AG04449 (cell line): ENCODE measurements at regions of chr9 and their contacts with region 1.

Region 1: DNA sequence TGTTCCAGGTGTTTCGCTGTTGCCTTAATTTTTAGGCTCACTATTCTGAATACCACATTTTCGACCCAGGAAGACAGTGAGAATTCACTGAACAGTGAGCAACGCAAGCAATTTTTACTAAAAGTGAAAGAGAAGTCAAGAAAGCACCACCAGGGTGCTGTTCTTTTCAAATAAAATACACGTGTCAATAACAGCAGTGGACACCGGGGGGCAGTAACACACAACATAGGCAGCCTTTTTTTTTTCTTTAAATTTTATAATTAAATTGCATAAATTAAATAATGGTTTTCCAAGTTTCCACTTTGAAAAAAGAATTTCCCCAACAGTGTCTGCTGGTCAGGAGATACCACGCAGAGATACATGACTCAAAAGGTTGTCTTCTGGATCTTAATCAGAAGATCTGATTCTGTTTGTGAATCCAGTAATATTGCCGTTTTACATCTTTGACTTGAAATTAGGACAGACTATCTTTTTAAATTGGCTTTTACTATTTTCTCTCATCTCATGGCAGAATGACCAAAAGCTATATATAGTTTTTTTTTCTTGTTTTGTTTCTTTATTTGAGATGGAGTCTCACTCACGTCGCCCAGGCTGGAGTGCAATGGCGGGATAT is 47.1 kb upstream of the SH3GL2 start:
- DNase-seq: no peak
- H3K4me3 ChIP-seq: peak overlapping the region; percentile 44
- CTCF ChIP-seq: peak; percentile 49

Region 2: GRCh38 chr9:17519761-17520160 is 12.0 kb before region 1 on chr9:
- CTCF ChIA-PET with region 1: interaction called, 26 read pairs
- POLR2A ChIA-PET with region 1: no interaction called
- DNase-seq: no peak
- H3K4me3 ChIP-seq: no peak overlapping the region
- CTCF ChIP-seq: no peak

Region 3: GRCh38 chr9:17556255-17556654 is 24.5 kb after region 1 on chr9:
- CTCF ChIA-PET with region 1: no interaction called
- POLR2A ChIA-PET with region 1: no interaction called
- DNase-seq: no peak
- H3K4me3 ChIP-seq: no peak overlapping the region
- CTCF ChIP-seq: no peak

Region 4: DNA sequence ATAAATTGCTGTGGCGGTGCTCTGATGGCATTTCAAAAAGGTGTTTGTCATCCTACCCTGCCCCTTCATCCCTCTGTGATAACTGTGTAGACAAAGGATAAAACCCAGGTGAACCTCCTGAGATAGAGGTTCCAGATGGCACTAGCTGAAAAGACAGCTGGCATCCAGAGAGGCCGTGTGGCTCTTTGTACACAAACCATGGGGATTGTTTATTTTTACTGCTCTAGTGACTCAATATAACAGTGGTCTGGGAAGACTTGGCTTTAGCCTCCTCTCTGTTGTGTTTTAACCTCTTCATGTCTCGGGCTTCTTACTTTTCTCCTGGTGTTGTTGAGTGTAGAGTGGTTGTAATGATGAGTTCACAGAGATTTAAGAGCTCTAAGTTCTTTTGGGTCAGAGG is 95.9 kb after region 1 on chr9:
- CTCF ChIA-PET with region 1: no interaction called
- POLR2A ChIA-PET with region 1: no interaction called
- DNase-seq: no peak
- H3K4me3 ChIP-seq: no peak overlapping the region
- CTCF ChIP-seq: no peak

Region 5: DNA sequence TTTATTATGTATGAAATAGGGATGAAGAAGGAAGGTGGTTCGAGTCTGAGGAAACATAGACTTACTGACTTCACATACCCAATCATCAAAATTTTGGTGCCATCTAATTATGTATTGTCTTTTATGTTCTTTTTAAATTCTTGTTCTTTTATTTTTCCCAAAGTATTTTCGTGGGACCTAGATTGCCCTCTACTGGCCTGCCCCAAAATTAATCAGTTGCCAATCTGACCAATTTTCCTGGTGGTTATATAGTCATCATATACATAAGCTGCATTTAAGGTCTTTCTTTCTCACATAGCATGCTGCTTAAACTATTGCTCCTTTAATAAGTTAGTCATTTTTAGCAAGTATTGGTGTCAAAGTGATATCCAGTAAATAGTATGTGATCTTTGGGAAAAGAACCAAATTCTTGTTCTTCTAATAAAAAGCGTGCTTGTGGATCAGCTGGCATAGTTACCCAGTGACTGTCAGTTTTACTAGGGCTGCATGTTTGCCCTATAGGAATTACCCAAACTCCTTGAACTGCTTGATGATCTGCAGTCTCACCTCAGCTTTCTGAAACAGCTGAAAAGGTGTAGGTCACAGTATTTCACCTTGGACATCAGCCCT is 270.6 kb after region 1 on chr9:
- CTCF ChIA-PET with region 1: interaction called, 76 read pairs
- POLR2A ChIA-PET with region 1: no interaction called
- DNase-seq: no peak
- H3K4me3 ChIP-seq: no peak overlapping the region
- CTCF ChIP-seq: peak; percentile 22

Region 6: DNA sequence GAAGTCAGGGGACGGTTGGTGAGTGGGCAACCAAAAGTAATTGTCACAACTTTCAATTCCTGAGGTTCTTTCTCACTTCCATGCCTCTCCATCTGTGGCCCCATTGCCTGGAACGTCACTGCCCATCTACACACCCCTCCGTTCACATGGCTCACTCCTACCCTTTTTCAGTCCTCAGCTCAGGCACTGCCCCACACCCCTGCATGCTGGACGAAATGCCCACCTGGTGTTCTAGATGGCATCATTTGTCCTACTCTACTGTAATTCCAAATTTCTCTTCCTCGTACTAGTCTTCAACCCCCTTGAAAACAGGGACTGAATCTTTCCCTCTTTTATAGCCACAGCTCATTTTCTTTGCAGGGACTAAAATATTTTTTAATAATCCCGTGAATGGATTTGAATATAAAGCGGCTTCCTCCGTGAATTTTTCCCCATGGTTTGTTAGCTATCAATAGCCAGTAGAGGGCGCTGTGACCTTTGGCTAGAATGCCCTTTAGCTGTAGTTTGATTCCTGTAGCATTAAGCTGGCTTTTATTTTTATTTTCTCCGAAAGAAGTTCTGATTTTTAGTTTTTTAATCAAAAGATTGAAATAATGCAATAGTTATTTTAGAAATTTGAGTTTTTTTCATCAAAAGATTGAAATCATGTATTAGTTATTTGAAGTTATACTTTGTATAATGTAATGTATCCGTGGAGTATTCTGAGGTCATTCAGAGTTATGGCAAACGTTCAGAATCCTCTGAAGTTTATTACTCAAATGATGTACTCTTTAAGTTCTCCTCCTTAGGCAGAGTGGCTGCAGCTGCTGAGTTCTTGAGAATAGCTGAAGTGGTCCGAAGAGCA is 279.2 kb after region 1 on chr9:
- CTCF ChIA-PET with region 1: interaction called, 76 read pairs
- POLR2A ChIA-PET with region 1: no interaction called
- DNase-seq: peak; percentile 17
- H3K4me3 ChIP-seq: no peak overlapping the region
- CTCF ChIP-seq: peak; percentile 66